ENCODE measurements at regions of chr6 and their contacts with region 1.

Region 1: DNA sequence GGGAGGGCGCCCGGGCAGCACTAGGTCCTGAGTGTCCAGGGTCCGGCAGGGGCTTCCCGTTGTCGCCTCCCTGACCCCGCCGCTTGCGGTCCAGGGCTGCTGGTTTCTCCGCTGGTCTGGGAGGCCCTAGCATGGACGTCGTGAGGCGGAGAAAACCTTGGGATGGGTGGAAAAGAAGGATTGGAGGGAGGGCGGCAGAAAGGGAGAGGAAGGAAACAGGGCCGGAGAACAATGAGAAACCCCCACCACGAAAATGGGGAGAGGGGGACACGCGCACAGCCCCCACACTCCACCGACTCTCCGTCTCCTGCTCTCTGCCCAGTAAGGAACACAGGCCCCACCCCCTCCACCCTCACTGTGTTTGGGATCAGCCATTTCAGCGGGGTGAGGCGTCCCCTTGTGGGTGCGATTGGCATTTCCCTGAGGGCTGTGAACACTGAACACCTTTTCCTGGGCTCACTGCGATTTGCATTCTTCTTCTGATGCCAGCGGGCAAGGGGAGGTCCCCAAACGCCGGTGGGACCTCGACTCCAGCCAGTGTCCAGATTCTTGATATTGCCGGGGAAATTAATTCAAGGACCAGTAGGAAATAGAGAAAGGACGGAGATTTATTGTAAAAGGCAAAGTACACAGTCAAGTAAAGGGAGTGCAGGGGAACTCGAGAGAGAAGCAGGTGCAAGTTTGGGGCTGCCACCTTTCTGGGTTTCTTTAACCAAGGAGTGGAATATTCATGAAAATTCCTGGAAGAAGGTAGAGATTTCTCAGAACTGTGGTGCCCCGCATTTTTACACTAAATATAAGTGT is 3.3 kb upstream of the RAET1G start:
- DNase-seq: peak; percentile 35 to 77 (median 56)
- ATAC-seq: peak; percentile 76
- H3K4me3 ChIP-seq: no peak overlapping the region
- H3K4me3 Mint-ChIP-seq: peak overlapping the region in 9 of 10 donors; percentile 12 to 73 (median 40)
- H3K27ac ChIP-seq: no peak overlapping the region
- H3K27ac Mint-ChIP-seq: peak overlapping the region in 1 of 9 donors; percentile 10
- H3K4me1 ChIP-seq: peaks cover 6 to 7% of the 10 kb centered on the region in 2 donors
- H3K4me1 Mint-ChIP-seq: peaks cover 18 to 30% (median 26%) of the 10 kb centered on the region in 7 donors
- H3K27me3 ChIP-seq: peaks cover 21 to 32% of the 10 kb centered on the region in 2 donors
- H3K27me3 Mint-ChIP-seq: peaks cover 85 to 93% (median 87%) of the 10 kb centered on the region in 5 donors

Region 2: GRCh38 chr6:149723771-149724417 is 202.3 kb before region 1 on chr6:
- CTCF ChIA-PET with region 1: no interaction called
- POLR2A ChIA-PET with region 1: no interaction called
- intact Hi-C with region 1: loop called (anchors 1 kb)
- DNase-seq: peak in 7 of 9 donors; percentile 29 to 50 (median 43)
- ATAC-seq: peak; percentile 93
- H3K4me3 ChIP-seq: no peak overlapping the region
- H3K4me3 Mint-ChIP-seq: no peak overlapping the region
- H3K27ac ChIP-seq: no peak overlapping the region
- H3K27ac Mint-ChIP-seq: peak overlapping the region in 4 of 9 donors; percentile 10 to 78 (median 34)
- H3K4me1 ChIP-seq: peaks cover 3 to 13% of the 10 kb centered on the region in 2 donors
- H3K4me1 Mint-ChIP-seq: peaks cover 16 to 30% (median 24%) of the 10 kb centered on the region in 7 donors
- H3K27me3 ChIP-seq: no peaks in the 10 kb centered on the region
- H3K27me3 Mint-ChIP-seq: no peaks in the 10 kb centered on the region

Region 3: DNA sequence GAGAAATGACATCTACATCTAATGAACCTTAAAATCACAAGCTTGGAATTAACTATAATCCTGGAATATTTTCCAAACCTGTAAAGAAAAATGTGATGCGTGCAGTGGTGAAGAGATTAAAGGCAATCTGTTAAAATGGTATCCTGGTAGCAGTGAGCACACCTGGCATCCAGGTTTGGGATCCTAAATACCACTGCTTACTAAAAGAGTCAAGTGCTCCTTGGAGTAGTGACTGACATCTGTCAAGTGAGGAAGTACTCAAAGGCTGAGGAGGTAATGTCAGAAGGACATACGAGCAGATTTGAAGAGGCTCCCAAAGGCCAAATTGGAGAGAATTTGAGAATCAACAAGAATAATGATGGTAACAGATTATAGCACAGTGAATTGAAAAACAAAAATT is 143.8 kb before region 1 on chr6:
- CTCF ChIA-PET with region 1: no interaction called
- POLR2A ChIA-PET with region 1: no interaction called
- intact Hi-C with region 1: no loop called
- DNase-seq: no peak
- ATAC-seq: no peak
- H3K4me3 ChIP-seq: no peak overlapping the region
- H3K4me3 Mint-ChIP-seq: no peak overlapping the region
- H3K27ac ChIP-seq: no peak overlapping the region
- H3K27ac Mint-ChIP-seq: no peak overlapping the region
- H3K4me1 ChIP-seq: no peaks in the 10 kb centered on the region
- H3K4me1 Mint-ChIP-seq: peaks cover 0 to 6% (median 0%) of the 10 kb centered on the region in 7 donors
- H3K27me3 ChIP-seq: no peaks in the 10 kb centered on the region
- H3K27me3 Mint-ChIP-seq: no peaks in the 10 kb centered on the region

Region 4: GRCh38 chr6:149834513-149835481 is 91.4 kb before region 1 on chr6:
- CTCF ChIA-PET with region 1: interaction called, 5 read pairs
- POLR2A ChIA-PET with region 1: no interaction called
- intact Hi-C with region 1: loop called (anchors 1 kb)
- DNase-seq: peak; percentile 50 to 85 (median 75)
- ATAC-seq: peak; percentile 92
- H3K4me3 ChIP-seq: no peak overlapping the region
- H3K4me3 Mint-ChIP-seq: no peak overlapping the region
- H3K27ac ChIP-seq: no peak overlapping the region
- H3K27ac Mint-ChIP-seq: no peak overlapping the region
- H3K4me1 ChIP-seq: no peaks in the 10 kb centered on the region
- H3K4me1 Mint-ChIP-seq: peaks cover 0 to 5% (median 4%) of the 10 kb centered on the region in 7 donors
- H3K27me3 ChIP-seq: no peaks in the 10 kb centered on the region
- H3K27me3 Mint-ChIP-seq: peaks cover 0 to 19% (median 4%) of the 10 kb centered on the region in 5 donors

Region 5: DNA sequence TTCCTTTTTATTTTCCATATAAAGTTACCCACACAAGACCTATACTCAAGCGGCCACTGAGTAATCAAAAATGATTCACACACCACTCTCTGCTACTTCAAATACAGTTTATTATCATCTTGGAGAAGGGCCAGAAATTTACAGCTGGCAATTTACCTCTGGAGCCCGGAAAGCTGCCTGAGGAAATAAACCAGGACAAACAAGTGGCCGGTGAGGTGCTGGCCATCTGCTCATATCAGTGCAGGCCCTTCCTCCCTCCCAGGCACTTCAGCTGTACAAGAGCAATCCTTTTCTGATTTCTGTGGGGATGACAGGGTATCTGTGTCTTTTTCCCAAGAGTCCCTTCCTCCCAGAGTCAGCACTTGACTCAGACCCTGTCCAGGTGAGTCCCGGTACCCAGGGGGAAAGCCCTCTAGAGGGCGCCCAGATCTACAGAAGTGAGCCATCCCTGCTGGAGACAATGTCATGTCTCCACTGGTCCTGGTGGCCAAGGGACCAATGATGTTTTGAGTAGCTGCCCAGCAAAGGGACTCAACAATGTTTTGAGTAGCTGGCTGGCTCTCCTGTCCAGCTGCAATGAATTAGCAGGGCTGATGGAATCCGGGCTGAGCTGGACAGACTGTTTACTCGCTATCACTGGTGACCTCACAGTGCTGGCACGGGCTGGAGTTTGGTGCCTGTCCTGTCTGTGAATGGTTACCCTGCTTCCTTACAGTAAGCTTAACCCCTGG is 85.7 kb before region 1 on chr6:
- CTCF ChIA-PET with region 1: interaction called, 5 read pairs
- POLR2A ChIA-PET with region 1: no interaction called
- intact Hi-C with region 1: loop called (anchors 1 kb)
- DNase-seq: peak in 4 of 9 donors; percentile 7 to 47 (median 10)
- ATAC-seq: no peak
- H3K4me3 ChIP-seq: no peak overlapping the region
- H3K4me3 Mint-ChIP-seq: no peak overlapping the region
- H3K27ac ChIP-seq: no peak overlapping the region
- H3K27ac Mint-ChIP-seq: no peak overlapping the region
- H3K4me1 ChIP-seq: no peaks in the 10 kb centered on the region
- H3K4me1 Mint-ChIP-seq: no peaks in the 10 kb centered on the region
- H3K27me3 ChIP-seq: peaks cover 0 to 3% of the 10 kb centered on the region in 2 donors
- H3K27me3 Mint-ChIP-seq: peaks cover 0 to 25% (median 4%) of the 10 kb centered on the region in 5 donors

Region 6: DNA sequence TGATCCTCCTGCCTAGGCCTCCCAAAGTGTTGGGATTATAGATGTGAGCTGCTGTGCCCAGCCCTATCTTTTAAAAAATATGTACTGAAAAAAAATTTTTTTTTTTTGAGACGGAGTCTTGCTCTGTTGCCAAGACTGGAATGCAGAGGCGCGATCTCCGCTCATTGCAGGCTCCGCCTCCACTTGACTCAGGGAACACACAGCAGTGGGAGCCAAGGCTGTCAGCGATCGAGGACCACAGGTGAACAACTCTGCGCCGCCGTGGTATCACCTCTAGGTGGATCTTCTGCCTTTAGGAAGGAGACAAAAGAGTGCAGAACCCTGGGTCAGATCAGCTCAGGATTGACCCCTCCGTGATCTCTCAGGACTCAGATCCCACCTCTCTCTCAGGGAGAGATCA is 42.0 kb before region 1 on chr6:
- CTCF ChIA-PET with region 1: no interaction called
- POLR2A ChIA-PET with region 1: no interaction called
- intact Hi-C with region 1: loop called in 1 of 2 experiments (anchors 5 kb)
- DNase-seq: no peak
- ATAC-seq: no peak
- H3K4me3 ChIP-seq: no peak overlapping the region
- H3K4me3 Mint-ChIP-seq: no peak overlapping the region
- H3K27ac ChIP-seq: no peak overlapping the region
- H3K27ac Mint-ChIP-seq: no peak overlapping the region
- H3K4me1 ChIP-seq: no peaks in the 10 kb centered on the region
- H3K4me1 Mint-ChIP-seq: no peaks in the 10 kb centered on the region
- H3K27me3 ChIP-seq: no peaks in the 10 kb centered on the region
- H3K27me3 Mint-ChIP-seq: peaks cover 21 to 42% (median 28%) of the 10 kb centered on the region in 5 donors

Region 7: GRCh38 chr6:149895833-149896271 is 30.3 kb before region 1 on chr6:
- CTCF ChIA-PET with region 1: no interaction called
- POLR2A ChIA-PET with region 1: no interaction called
- intact Hi-C with region 1: loop called in 1 of 2 experiments (anchors 1 kb)
- DNase-seq: peak in 7 of 9 donors; percentile 22 to 62 (median 52)
- ATAC-seq: peak; percentile 80
- H3K4me3 ChIP-seq: no peak overlapping the region
- H3K4me3 Mint-ChIP-seq: no peak overlapping the region
- H3K27ac ChIP-seq: no peak overlapping the region
- H3K27ac Mint-ChIP-seq: peak overlapping the region in 1 of 9 donors; percentile 40
- H3K4me1 ChIP-seq: peaks cover 0 to 9% of the 10 kb centered on the region in 2 donors
- H3K4me1 Mint-ChIP-seq: peaks cover 9 to 29% (median 11%) of the 10 kb centered on the region in 7 donors
- H3K27me3 ChIP-seq: no peaks in the 10 kb centered on the region
- H3K27me3 Mint-ChIP-seq: peaks cover 3 to 32% (median 6%) of the 10 kb centered on the region in 5 donors

Region 8: DNA sequence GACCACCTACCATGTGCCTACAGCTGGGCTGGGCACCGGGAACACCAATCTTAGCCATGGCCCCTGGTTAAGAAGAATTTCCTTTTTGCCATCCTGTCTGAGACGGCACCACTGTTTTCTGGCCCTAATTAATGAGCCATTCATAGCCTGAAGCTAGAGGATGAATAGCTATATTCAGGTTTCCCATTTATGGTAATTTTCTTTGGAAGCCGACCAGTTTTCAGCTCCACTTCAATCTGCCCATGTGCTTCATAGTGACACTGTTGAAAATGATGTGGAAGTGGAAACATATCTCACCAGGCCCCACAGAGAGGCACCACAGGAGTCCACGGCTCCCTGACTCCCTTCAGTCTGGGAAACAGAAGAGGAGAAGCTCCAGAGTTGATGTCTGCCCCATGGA is 165.3 kb after region 1 on chr6:
- CTCF ChIA-PET with region 1: no interaction called
- POLR2A ChIA-PET with region 1: no interaction called
- intact Hi-C with region 1: no loop called
- DNase-seq: no peak
- ATAC-seq: no peak
- H3K4me3 ChIP-seq: no peak overlapping the region
- H3K4me3 Mint-ChIP-seq: no peak overlapping the region
- H3K27ac ChIP-seq: no peak overlapping the region
- H3K27ac Mint-ChIP-seq: no peak overlapping the region
- H3K4me1 ChIP-seq: no peaks in the 10 kb centered on the region
- H3K4me1 Mint-ChIP-seq: peaks cover 0 to 4% (median 0%) of the 10 kb centered on the region in 7 donors
- H3K27me3 ChIP-seq: no peaks in the 10 kb centered on the region
- H3K27me3 Mint-ChIP-seq: peaks cover 5 to 13% (median 12%) of the 10 kb centered on the region in 5 donors